ENCODE measurements at regions of chr6 and their contacts with region 1.

Region 1: DNA sequence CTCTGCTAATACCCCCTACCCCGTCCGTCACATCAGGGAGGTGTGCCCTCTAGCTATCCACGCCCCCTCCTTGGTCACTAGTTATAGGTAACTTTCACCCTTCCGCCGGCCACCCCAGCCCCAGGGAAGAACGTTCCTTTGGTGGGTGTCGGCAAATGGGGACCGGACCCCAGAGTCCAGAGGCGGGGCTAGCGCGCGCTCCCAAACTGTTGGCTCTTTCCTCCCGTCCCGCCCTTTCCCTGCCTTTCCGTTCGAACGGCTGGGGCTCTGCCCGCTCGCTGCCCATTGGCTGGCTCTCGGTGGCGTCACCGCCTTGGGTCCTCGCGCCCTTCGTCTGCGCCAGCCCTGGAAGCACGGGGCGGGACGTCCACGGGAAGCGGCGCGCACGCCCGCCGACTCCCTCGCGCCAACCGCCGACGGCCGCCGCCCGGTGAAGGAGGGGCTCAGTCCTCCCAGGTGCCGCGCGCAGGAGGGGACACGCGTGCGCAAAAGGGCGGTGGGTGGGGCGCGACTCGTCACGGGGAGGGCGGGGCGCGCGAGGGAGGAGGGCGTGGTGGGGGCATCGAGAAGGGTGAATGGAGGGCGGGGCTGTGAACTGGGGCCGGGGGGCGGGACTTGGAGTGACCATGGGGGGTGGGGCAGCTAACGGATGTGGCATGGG is 634 bp upstream of the PHF1 start:
- DNase-seq: peak; percentile 99
- H3K4me3 ChIP-seq: peak overlapping the region; percentile 56 to 80 (median 64)
- H3K27ac ChIP-seq: peak overlapping the region; percentile 88
- H3K4me1 ChIP-seq: peaks cover 6% of the 10 kb centered on the region
- H3K27me3 ChIP-seq: no peaks in the 10 kb centered on the region
- CTCF ChIP-seq: no peak

Region 2: GRCh38 chr6:32825966-32826365 is 584.2 kb before region 1 on chr6:
- CTCF ChIA-PET with region 1: no interaction called
- dilution Hi-C with region 1: no loop called
- in situ Hi-C with region 1: no loop called
- intact Hi-C with region 1: no loop called
- DNase-seq: peak; percentile 84
- H3K4me3 ChIP-seq: no peak overlapping the region
- H3K27ac ChIP-seq: peak overlapping the region; percentile 47
- H3K4me1 ChIP-seq: peaks cover 9% of the 10 kb centered on the region
- H3K27me3 ChIP-seq: no peaks in the 10 kb centered on the region
- CTCF ChIP-seq: peak; percentile 41 to 64

Region 3: DNA sequence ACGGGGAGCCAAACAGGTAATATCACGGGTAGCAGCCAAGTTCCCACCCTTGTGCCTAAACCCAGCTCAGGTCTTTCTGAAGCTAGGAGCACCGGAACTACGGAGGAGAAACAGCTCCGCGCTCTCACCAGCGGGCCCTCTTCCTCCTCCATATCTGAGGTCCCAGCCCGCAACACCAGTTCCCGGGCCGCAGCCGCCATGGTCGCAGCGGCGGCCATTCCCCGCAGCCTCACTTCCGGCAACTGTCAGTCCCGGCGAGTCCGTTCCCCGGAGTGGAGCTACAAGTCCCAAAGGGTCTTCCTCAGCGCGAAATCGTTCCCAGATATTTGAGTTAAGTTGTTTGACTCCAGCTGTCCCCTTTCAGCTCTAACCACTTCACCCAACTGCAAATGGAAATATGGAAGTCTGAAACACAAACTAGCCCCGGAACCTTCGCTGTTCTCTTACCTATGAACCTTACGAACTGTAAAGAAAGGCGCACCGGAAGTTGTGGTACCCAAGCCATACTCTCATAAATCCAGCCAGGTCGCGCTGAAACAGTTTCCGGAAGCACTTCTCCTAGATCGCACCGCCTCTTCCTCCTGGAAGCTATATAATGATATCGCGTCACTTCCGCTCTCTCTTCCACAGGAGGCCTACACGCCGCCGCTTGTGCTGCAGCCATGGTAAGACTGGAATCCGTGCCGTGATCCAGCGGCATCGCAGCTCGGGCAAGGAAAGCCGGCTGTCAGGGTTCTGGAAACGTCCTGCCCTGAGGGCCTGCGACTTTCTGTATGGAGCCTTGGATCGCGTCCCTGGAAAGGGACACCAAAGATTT is 138.5 kb before region 1 on chr6 and contains the starts of genes RPS18 and VPS52:
- CTCF ChIA-PET with region 1: no interaction called
- dilution Hi-C with region 1: no loop called
- in situ Hi-C with region 1: loop called in 1 of 2 experiments (anchors 10 kb)
- intact Hi-C with region 1: no loop called
- DNase-seq: peak; percentile 96
- H3K4me3 ChIP-seq: peak within 1 kb of the TSS; percentile 73 to 82 (median 75)
- H3K27ac ChIP-seq: peak within 1 kb of the TSS; percentile 91
- H3K4me1 ChIP-seq: peaks cover 39% of the 10 kb centered on the region
- H3K27me3 ChIP-seq: no peaks in the 10 kb centered on the region
- CTCF ChIP-seq: peak in 1 of 2 donors; percentile 5
- total RNA-seq, gene RPS18: 2,176 to 2,484 TPM
- total RNA-seq, gene VPS52: 34.0 to 40.2 TPM

Region 4: GRCh38 chr6:33391278-33391921 is 18.8 kb before region 1 on chr6 and contains the start of gene KIFC1:
- CTCF ChIA-PET with region 1: no interaction called
- dilution Hi-C with region 1: no loop called
- in situ Hi-C with region 1: no loop called
- intact Hi-C with region 1: loop called (anchors 1 kb)
- DNase-seq: peak; percentile 100
- H3K4me3 ChIP-seq: peak within 1 kb of the TSS; percentile 67 to 93 (median 91)
- H3K27ac ChIP-seq: peak within 1 kb of the TSS; percentile 88
- H3K4me1 ChIP-seq: peaks cover 37% of the 10 kb centered on the region
- H3K27me3 ChIP-seq: no peaks in the 10 kb centered on the region
- CTCF ChIP-seq: peak; percentile 88 to 94
- total RNA-seq, gene KIFC1: 2.8 to 36.7 TPM

Region 5: GRCh38 chr6:33508935-33509926 is 99.1 kb after region 1 on chr6:
- CTCF ChIA-PET with region 1: no interaction called
- dilution Hi-C with region 1: no loop called
- in situ Hi-C with region 1: no loop called
- intact Hi-C with region 1: no loop called
- DNase-seq: no peak
- H3K4me3 ChIP-seq: no peak overlapping the region
- H3K27ac ChIP-seq: no peak overlapping the region
- H3K4me1 ChIP-seq: no peaks in the 10 kb centered on the region
- H3K27me3 ChIP-seq: no peaks in the 10 kb centered on the region
- CTCF ChIP-seq: no peak

Region 6: GRCh38 chr6:33607784-33608161 is 197.6 kb after region 1 on chr6:
- CTCF ChIA-PET with region 1: no interaction called
- dilution Hi-C with region 1: no loop called
- in situ Hi-C with region 1: no loop called
- intact Hi-C with region 1: no loop called
- DNase-seq: no peak
- H3K4me3 ChIP-seq: no peak overlapping the region
- H3K27ac ChIP-seq: no peak overlapping the region
- H3K4me1 ChIP-seq: peaks cover 49% of the 10 kb centered on the region
- H3K27me3 ChIP-seq: no peaks in the 10 kb centered on the region
- CTCF ChIP-seq: peak; percentile 37 to 55

Region 7: GRCh38 chr6:33851959-33852358 is 441.8 kb after region 1 on chr6:
- CTCF ChIA-PET with region 1: no interaction called
- dilution Hi-C with region 1: no loop called
- in situ Hi-C with region 1: no loop called
- intact Hi-C with region 1: no loop called
- DNase-seq: no peak
- H3K4me3 ChIP-seq: no peak overlapping the region
- H3K27ac ChIP-seq: no peak overlapping the region
- H3K4me1 ChIP-seq: peaks cover 4% of the 10 kb centered on the region
- H3K27me3 ChIP-seq: no peaks in the 10 kb centered on the region
- CTCF ChIP-seq: peak; percentile 50 to 78

Measured in mammary epithelial cell (primary cell).